PC-9 (cell line): ENCODE measurements at regions of chr14 and their contacts with region 1.

Region 1: DNA sequence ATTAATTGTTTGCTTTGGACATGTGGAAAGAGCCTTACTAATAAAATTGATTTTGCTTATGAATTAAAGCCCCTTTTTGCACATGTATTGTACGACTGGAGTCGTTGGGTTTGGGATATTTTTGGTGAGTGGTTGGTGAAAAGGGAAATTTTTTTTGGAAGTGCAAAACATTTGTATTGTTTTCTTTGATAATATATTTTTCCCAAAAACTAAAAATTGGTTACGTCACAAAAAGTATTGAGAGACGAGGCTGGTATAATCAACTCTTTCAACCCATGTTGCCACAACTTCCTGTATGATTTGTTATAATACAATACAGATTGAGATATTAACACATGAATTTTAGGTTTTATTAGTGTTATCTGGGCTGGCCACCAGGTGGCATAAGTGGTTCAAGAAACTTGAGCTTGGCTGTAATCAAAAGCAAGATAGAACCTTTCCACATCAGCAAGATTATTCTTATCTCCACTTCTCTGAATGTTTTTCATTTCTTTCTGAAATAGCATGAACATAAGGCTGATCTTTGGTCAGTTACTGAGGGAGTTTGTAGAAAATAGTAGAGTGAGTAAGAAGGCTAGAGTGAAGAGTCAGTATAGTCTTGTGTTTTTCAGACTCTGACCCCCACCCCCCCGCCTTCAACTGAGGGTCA is 8.7 kb downstream of the NGDN start:
- DNase-seq: peak in 1 of 2 experiments; percentile 44
- H3K4me3 ChIP-seq: no peak overlapping the region
- H3K27ac ChIP-seq: no peak overlapping the region
- H3K4me1 ChIP-seq: no peaks in the 10 kb centered on the region
- H3K27me3 ChIP-seq: no peaks in the 10 kb centered on the region
- CTCF ChIP-seq: peak; percentile 85

Region 2: DNA sequence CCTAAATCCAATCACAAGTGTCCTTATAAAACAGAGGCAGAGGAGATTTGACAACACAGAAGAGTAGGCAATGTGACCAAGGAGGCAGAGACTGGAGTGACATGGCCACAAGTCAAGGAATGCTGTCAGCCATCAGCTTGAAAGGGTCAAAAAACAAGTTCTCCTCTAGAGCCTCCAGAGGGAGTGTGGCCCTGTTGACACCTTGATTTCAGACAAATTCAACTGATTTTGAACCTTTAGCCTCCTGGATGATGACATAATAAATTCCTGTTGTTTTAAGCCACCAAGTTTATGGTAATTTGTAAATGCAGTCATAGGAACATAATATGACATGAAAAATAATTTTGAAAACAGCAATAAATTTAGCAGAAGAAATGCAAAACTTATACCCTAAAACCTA is 17.3 kb before region 1 on chr14:
- CTCF ChIA-PET with region 1: no interaction called
- POLR2A ChIA-PET with region 1: no interaction called
- intact Hi-C with region 1: no loop called
- DNase-seq: no peak
- H3K4me3 ChIP-seq: no peak overlapping the region
- H3K27ac ChIP-seq: no peak overlapping the region
- H3K4me1 ChIP-seq: no peaks in the 10 kb centered on the region
- H3K27me3 ChIP-seq: no peaks in the 10 kb centered on the region
- CTCF ChIP-seq: no peak

Region 3: GRCh38 chr14:23528555-23528954 is 50.3 kb after region 1 on chr14:
- CTCF ChIA-PET with region 1: no interaction called
- POLR2A ChIA-PET with region 1: no interaction called
- intact Hi-C with region 1: no loop called
- DNase-seq: no peak
- H3K4me3 ChIP-seq: no peak overlapping the region
- H3K27ac ChIP-seq: no peak overlapping the region
- H3K4me1 ChIP-seq: no peaks in the 10 kb centered on the region
- H3K27me3 ChIP-seq: no peaks in the 10 kb centered on the region
- CTCF ChIP-seq: no peak

Region 4: DNA sequence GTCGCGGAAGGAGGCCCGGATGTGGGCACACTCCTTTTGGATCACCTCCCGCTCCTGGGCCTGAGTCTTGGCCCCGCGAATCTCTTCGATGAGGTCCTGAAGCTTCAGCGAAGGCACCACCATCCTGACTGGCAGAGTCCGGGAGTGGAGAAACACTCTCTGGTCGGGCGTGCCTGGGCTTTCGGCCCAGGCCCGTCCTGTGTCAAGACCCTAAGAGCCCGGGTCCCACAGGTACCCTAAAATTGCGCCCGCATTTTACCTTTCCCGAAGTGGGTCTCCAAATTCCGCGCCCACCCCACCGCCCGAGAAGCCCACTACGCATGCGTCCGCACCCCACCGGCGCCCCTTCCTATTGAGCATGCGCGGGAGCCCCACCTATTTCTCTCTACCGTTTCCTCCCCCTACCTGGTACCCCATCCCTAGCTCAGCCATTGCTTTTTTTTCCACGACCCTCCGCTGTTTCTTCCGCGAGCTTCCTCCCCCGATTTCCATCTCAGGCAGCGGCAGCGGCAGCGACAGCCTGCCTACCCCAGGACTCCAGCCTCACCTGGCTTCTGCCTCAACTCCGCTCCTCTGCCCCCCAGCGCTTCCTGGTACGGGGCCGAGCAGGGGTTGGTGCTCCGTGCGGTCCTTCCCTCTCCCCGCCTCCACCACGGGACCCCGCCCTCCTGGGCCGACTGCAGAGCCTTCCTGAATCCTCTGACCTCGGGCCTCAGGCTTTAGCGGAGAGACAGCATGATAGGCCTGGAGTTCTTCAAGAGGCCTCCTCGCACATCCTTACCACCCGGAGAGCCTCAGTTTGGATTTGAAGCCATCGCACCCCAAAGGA is 89.2 kb after region 1 on chr14 and contains the start of gene AP1G2:
- CTCF ChIA-PET with region 1: interaction called, 4 read pairs
- POLR2A ChIA-PET with region 1: no interaction called
- intact Hi-C with region 1: loop called (anchors 1 kb)
- DNase-seq: peak; percentile 71 to 90
- H3K4me3 ChIP-seq: peak within 1 kb of the TSS; percentile 79
- H3K27ac ChIP-seq: peak within 1 kb of the TSS; percentile 53; the same call in 1 of the 2 replicates
- H3K4me1 ChIP-seq: peaks cover 24% of the 10 kb centered on the region
- H3K27me3 ChIP-seq: no peaks in the 10 kb centered on the region
- CTCF ChIP-seq: no peak
- total RNA-seq, gene AP1G2: 128 and 160 TPM in 2 replicates

Region 5: DNA sequence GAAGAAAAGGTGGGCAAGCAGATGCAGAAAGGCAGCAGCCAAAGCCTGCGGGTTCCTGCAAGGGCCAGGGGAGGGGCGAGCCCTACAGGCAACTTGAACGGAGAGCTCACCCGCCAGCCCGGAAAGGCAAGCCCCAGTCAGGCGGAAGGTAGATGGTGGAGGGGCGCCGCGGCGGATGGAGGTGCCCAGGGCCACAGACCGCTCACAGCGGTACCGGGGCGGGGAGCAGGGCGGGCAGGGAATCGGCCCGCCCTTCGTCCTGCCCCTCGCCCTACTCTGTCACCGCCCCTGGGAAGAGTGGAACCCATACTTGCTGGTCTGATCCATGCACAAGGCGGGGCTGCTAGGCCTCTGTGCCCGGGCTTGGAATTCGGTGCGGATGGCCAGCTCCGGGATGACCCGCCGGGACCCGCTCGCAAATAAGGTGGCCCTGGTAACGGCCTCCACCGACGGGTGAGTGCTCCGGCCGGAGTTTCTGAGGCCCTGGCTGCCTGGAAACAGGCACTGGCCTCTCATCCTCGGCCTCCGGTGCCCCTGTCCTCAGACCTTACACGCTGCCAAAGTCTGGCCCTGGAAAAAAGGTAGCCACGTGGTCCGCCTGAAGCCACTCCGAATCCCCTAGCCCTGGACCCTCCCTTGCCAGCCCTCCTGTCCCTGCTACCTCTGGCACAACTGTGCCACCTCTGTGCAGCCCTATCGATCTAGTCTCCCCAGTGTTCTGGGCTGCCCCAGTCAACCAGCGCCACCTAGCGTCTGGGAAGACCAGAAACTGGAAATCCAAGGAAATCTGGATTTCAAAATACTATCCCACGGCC is 475.4 kb after region 1 on chr14 and contains the start of gene DHRS4:
- CTCF ChIA-PET with region 1: no interaction called
- POLR2A ChIA-PET with region 1: no interaction called
- intact Hi-C with region 1: loop called (anchors 1 kb)
- DNase-seq: peak; percentile 64 to 78
- H3K4me3 ChIP-seq: peak within 1 kb of the TSS; percentile 78
- H3K27ac ChIP-seq: peak within 1 kb of the TSS; percentile 70
- H3K4me1 ChIP-seq: no peaks in the 10 kb centered on the region; the same call in 1 of the 2 replicates
- H3K27me3 ChIP-seq: no peaks in the 10 kb centered on the region
- CTCF ChIP-seq: peak; percentile 90
- total RNA-seq, gene DHRS4: 17.6 and 24.1 TPM in 2 replicates